PC-3 (cell line): ENCODE measurements at regions of chr2 and their contacts with region 1.

Region 1: GRCh38 chr2:237315170-237315828 is 98.7 kb downstream of the COL6A3 start:
- DNase-seq: no peak
- ATAC-seq: no peak
- H3K4me3 ChIP-seq: no peak overlapping the region
- H3K27ac ChIP-seq: no peak overlapping the region
- H3K4me1 ChIP-seq: no peaks in the 10 kb centered on the region
- H3K27me3 ChIP-seq: no peaks in the 10 kb centered on the region
- CTCF ChIP-seq: no peak

Region 2: DNA sequence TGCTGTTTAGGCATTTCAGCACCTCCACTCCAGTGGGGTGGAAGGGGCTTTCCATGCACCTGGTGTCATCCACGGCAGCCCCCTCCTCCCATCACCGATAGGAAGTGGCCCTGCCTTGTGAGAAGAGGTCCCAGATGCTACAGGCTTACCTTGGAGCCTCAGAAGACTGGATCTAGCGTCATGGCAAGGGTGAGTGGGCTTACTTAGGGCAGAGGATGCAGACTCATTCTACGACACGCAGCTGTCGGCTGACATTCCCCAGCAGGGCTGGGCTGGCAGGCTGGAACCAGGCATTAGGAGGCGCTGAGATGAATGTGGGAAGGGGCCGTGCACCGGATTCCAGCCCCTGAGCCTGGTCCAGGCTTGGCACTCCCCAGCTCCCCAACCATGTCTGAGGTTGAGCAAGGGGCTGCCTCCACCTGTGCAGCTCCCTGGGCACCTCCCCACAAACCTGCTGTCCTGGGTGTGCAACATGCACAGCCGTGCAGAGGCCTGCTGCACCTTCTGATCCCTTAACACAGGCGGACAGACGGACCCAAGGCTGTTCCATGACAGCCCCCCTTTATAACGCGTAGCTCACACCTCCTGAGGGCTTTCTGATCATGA is 249.3 kb after region 1 on chr2:
- CTCF ChIA-PET with region 1: interaction called, 10 read pairs
- POLR2A ChIA-PET with region 1: no interaction called
- intact Hi-C with region 1: no loop called
- DNase-seq: no peak
- ATAC-seq: no peak
- H3K4me3 ChIP-seq: no peak overlapping the region
- H3K27ac ChIP-seq: no peak overlapping the region
- H3K4me1 ChIP-seq: no peaks in the 10 kb centered on the region
- H3K27me3 ChIP-seq: no peaks in the 10 kb centered on the region
- CTCF ChIP-seq: no peak

Region 3: GRCh38 chr2:237806334-237806733 is 491.0 kb after region 1 on chr2:
- CTCF ChIA-PET with region 1: no interaction called
- POLR2A ChIA-PET with region 1: no interaction called
- intact Hi-C with region 1: no loop called
- DNase-seq: no peak
- ATAC-seq: no peak
- H3K4me3 ChIP-seq: no peak overlapping the region
- H3K27ac ChIP-seq: no peak overlapping the region
- H3K4me1 ChIP-seq: no peaks in the 10 kb centered on the region
- H3K27me3 ChIP-seq: 0 out of 2 replicates have a peak, but pooled peaks cover 6% of the 10 kb centered on the region
- CTCF ChIP-seq: no peak